ENCODE measurements at regions of chr12 and their contacts with region 1.

Region 1: DNA sequence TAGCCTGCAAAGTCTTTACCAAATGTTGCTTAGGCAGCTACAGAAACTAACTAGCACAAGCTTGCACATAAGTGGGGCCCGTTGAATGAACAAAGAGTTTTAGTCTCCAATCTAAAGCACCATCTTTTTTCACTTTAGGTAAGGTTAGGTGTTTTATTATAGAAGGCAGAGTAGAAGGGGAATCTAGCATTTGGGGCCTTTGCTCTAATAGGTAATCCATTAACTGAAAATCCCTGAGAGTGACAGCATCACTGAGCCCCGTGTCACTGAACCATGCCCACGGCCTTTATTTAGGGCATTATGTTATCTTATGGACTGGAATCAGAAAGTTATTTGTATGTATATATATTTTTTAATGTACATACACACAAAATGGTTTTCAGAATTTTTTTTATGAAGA is 25.1 kb downstream of the CPNE8 start:
- DNase-seq: no peak
- ATAC-seq: no peak
- H3K4me3 ChIP-seq: no peak overlapping the region
- H3K27ac ChIP-seq: no peak overlapping the region
- H3K4me1 ChIP-seq: no peaks in the 10 kb centered on the region
- H3K27me3 ChIP-seq: no peaks in the 10 kb centered on the region
- CTCF ChIP-seq: no peak

Region 2: DNA sequence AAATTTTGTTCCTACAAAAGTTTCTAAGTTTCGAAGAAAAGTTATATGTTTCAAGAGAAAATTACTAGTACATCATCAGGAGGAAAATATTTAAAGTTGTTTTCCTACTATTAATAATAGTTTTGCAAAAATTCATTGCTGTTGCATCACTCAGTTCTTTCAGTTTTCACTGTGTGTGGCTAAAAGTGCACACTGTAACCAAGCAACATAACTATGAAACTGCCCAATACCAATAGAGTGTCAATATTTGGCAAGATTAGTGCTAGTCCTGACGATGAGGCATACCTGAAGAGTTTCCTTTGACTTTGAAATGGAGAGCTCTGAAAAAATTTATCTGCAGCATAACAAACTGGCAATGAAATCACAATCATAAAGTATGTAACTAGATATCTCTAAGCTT is 169.2 kb before region 1 on chr12:
- CTCF ChIA-PET with region 1: no interaction called
- POLR2A ChIA-PET with region 1: interaction called, 10 read pairs
- in situ Hi-C with region 1: no loop called
- intact Hi-C with region 1: no loop called
- DNase-seq: no peak
- ATAC-seq: no peak
- H3K4me3 ChIP-seq: no peak overlapping the region
- H3K27ac ChIP-seq: no peak overlapping the region
- H3K4me1 ChIP-seq: no peaks in the 10 kb centered on the region
- H3K27me3 ChIP-seq: no peaks in the 10 kb centered on the region
- CTCF ChIP-seq: no peak

Region 3: GRCh38 chr12:38869036-38869435 is 11.3 kb before region 1 on chr12:
- CTCF ChIA-PET with region 1: no interaction called
- POLR2A ChIA-PET with region 1: no interaction called
- in situ Hi-C with region 1: no loop called
- intact Hi-C with region 1: no loop called
- DNase-seq: no peak
- ATAC-seq: no peak
- H3K4me3 ChIP-seq: no peak overlapping the region
- H3K27ac ChIP-seq: no peak overlapping the region
- H3K4me1 ChIP-seq: no peaks in the 10 kb centered on the region
- H3K27me3 ChIP-seq: no peaks in the 10 kb centered on the region
- CTCF ChIP-seq: no peak

Region 4: GRCh38 chr12:38898006-38898684 is 17.9 kb after region 1 on chr12:
- CTCF ChIA-PET with region 1: no interaction called
- POLR2A ChIA-PET with region 1: no interaction called
- in situ Hi-C with region 1: no loop called
- intact Hi-C with region 1: loop called (anchors 2 kb)
- DNase-seq: no peak
- ATAC-seq: no peak
- H3K4me3 ChIP-seq: no peak overlapping the region
- H3K27ac ChIP-seq: peak overlapping the region; percentile 18; the same call in 1 of the 2 replicates
- H3K4me1 ChIP-seq: peaks cover 18% of the 10 kb centered on the region
- H3K27me3 ChIP-seq: no peaks in the 10 kb centered on the region
- CTCF ChIP-seq: no peak